ENCODE measurements at regions of chr17 and their contacts with region 1.

Region 1: GRCh38 chr17:8057691-8058114 is 18.8 kb downstream of the ALOX15B start:
- DNase-seq: peak; percentile 80
- H3K4me3 ChIP-seq: peak overlapping the region; percentile 29 to 50; a peak in 3 of 4 replicates
- H3K27ac ChIP-seq: no peak overlapping the region
- H3K4me1 ChIP-seq: peaks cover 4 to 7% of the 10 kb centered on the region in 2 experiments; a peak in 2 of 4 replicates
- H3K27me3 ChIP-seq: peaks cover 33% of the 10 kb centered on the region
- CTCF ChIP-seq: peak; percentile 75
- EP300 ChIP-seq: no peak
- RAD21 ChIP-seq: peak; percentile 91

Region 2: GRCh38 chr17:7856883-7857723 is 200.6 kb before region 1 on chr17 and contains the start of gene NAA38:
- CTCF ChIA-PET with region 1: interaction called, 69 read pairs
- POLR2A ChIA-PET with region 1: no interaction called
- DNase-seq: peak; percentile 90
- H3K4me3 ChIP-seq: peak within 1 kb of the TSS; percentile 72 to 77
- H3K27ac ChIP-seq: peak within 1 kb of the TSS; percentile 93 to 100
- H3K4me1 ChIP-seq: peaks cover 23 to 35% of the 10 kb centered on the region in 2 experiments; a peak in 3 of 4 replicates
- H3K27me3 ChIP-seq: no peaks in the 10 kb centered on the region
- CTCF ChIP-seq: peak; percentile 47
- EP300 ChIP-seq: 0 out of 4 replicates have a peak, but pooled peaks of 1 of the 2 experiments have one; percentile 6
- RAD21 ChIP-seq: peak; percentile 38
- polyA plus RNA-seq, gene NAA38: 133 and 202 TPM in 2 replicates

Region 3: DNA sequence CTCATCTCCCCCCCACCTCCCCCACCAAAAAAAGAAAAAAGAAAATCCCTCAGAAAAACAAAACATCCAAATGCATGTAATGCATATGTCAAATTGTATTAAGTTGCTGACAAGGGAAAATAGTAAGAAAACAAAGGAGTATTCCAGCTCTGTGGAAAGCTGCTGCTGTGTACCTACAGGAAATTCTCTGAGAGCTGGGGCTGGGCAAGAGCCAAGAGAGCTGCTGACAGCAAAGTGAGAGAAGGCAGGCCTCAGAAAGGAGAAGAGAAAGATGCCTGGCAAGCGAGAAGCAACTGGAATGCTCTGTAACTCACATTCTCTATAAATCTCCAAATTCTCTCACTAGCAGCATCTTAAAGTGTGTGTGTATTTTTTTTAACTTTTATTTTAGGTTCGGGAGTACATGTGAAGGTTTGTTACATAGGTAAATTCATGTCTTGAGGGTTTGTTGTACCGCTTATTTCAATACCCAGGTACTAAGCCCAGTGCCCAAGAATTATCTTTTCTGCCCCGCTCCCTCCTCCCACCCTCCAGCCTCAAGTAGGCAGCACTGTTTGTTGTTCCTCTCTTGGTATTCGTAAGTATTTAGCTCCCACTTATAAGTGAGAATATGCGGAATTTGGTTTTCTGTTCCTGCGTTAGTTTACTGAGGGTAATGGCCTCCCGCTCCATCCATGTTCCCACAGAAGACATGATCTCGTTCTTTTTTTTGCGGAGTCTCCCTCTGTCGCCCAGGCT is 101.3 kb before region 1 on chr17:
- CTCF ChIA-PET with region 1: no interaction called
- POLR2A ChIA-PET with region 1: no interaction called
- DNase-seq: peak; percentile 34
- H3K4me3 ChIP-seq: no peak overlapping the region
- H3K27ac ChIP-seq: peak overlapping the region in 1 of 2 experiments; percentile 7; a peak in 1 of 4 replicates
- H3K4me1 ChIP-seq: no peaks in the 10 kb centered on the region; a peak in 1 of 4 replicates
- H3K27me3 ChIP-seq: no peaks in the 10 kb centered on the region
- CTCF ChIP-seq: no peak
- EP300 ChIP-seq: no peak
- RAD21 ChIP-seq: no peak

Region 4: GRCh38 chr17:7982666-7983065 is 75.0 kb before region 1 on chr17:
- CTCF ChIA-PET with region 1: interaction called, 117 read pairs
- POLR2A ChIA-PET with region 1: no interaction called
- DNase-seq: no peak
- H3K4me3 ChIP-seq: peak overlapping the region in 1 of 2 experiments; percentile 33; a peak in 1 of 4 replicates
- H3K27ac ChIP-seq: peak overlapping the region in 1 of 2 experiments; percentile 59; a peak in 2 of 4 replicates
- H3K4me1 ChIP-seq: no peaks in the 10 kb centered on the region; a peak in 1 of 4 replicates
- H3K27me3 ChIP-seq: no peaks in the 10 kb centered on the region
- CTCF ChIP-seq: peak; percentile 48
- EP300 ChIP-seq: no peak
- RAD21 ChIP-seq: peak; percentile 58

Region 5: DNA sequence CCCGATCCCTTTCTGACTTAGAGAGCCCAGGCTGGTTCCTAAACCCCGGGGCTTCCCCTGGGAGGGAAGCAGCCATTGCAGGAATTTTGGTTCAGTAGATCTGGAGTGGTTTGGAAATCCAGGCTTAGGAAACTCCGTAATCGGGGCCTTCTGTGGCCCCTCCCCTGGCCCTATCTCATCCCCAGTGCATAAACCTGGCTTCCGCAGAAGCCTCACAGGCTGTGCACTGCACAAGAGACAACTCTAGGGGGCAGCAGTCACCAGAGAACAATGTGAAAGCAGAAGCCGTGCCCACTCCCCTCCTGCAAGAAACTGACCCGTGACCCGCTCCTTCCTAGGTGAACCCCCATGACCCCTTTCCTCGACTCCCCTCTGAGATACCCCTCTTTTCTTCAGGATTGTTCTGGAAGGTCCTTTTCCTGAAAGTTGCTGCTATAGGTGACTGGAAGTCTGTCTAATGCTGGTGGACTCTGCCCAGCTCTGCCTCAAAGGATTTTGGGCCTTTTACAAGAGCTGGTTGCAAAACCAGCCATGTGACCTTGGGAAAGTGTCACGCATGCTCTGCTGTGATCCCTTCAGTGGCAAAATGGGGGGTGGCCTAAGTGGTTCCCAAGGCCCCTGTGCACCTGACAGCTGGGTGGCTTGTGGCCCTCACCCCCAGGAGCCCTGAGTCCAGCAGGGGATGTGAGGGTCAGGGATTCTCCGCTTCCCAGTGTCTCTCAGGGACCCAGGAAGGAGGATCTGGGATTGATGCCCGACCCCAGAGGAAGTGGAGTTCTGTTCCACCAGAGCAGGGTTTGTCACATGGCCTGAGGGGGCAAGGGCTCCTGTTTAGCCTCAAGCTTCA is 40.8 kb before region 1 on chr17:
- CTCF ChIA-PET with region 1: interaction called, 196 read pairs
- POLR2A ChIA-PET with region 1: no interaction called
- DNase-seq: peak; percentile 82
- H3K4me3 ChIP-seq: peak overlapping the region; percentile 45 to 53
- H3K27ac ChIP-seq: no peak overlapping the region
- H3K4me1 ChIP-seq: peaks cover 0 to 15% of the 10 kb centered on the region in 2 experiments; a peak in 1 of 4 replicates
- H3K27me3 ChIP-seq: no peaks in the 10 kb centered on the region
- CTCF ChIP-seq: peak; percentile 72
- EP300 ChIP-seq: no peak
- RAD21 ChIP-seq: peak; percentile 76

Region 6: GRCh38 chr17:8079291-8080207 is 21.8 kb after region 1 on chr17:
- CTCF ChIA-PET with region 1: interaction called, 390 read pairs
- POLR2A ChIA-PET with region 1: no interaction called
- DNase-seq: peak; percentile 95
- H3K4me3 ChIP-seq: peak overlapping the region; percentile 49 to 63
- H3K27ac ChIP-seq: peak overlapping the region in 1 of 2 experiments; percentile 58; a peak in 1 of 4 replicates
- H3K4me1 ChIP-seq: peaks cover 0 to 6% of the 10 kb centered on the region in 2 experiments; a peak in 1 of 4 replicates
- H3K27me3 ChIP-seq: peaks cover 33% of the 10 kb centered on the region
- CTCF ChIP-seq: peak; percentile 79
- EP300 ChIP-seq: no peak
- RAD21 ChIP-seq: peak; percentile 60

Region 7: GRCh38 chr17:8109661-8110464 is 52.2 kb after region 1 on chr17:
- CTCF ChIA-PET with region 1: interaction called, 118 read pairs
- POLR2A ChIA-PET with region 1: no interaction called
- DNase-seq: peak; percentile 84
- H3K4me3 ChIP-seq: peak overlapping the region in 1 of 2 experiments; percentile 37; a peak in 1 of 4 replicates
- H3K27ac ChIP-seq: no peak overlapping the region
- H3K4me1 ChIP-seq: no peaks in the 10 kb centered on the region; a peak in 1 of 4 replicates
- H3K27me3 ChIP-seq: peaks cover 21% of the 10 kb centered on the region; the same call in 1 of the 2 replicates
- CTCF ChIP-seq: peak; percentile 68
- EP300 ChIP-seq: no peak
- RAD21 ChIP-seq: peak; percentile 52

Measured in SK-N-SH (cell line).